ENCODE measurements at regions of chr14 and their contacts with region 1.

Region 1: DNA sequence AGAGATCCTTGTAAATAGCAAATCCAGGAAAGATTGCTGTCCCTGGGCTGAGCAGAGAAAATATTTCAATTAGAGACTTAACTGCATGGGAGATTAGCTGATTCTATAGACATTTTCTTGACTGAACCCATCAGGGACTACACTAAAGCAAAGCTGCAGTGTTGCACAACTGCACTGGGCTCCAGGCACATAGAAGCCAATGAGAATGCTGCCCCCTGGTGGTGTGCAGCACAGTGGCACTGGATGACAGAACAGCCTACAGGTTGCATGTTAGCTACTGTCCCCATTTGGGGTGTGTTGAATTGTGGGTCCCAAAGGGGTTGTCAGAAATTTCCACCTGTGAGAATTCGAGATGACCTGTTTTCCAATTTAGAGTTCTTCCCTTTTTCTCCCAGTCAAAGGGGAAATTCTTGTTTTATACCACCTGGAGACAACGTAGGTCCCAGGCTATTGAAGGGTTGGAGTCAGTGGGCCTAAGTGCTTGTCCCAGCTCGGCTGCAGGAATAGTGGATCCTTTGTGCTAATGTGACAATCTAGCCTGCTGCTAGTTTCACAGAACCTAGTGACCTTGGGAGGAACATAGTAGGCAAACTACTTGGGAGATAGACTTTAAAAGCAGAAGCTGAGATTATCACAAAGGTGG is 114.7 kb downstream of the SLC8A3 start:
- DNase-seq: peak; percentile 68
- H3K4me3 ChIP-seq: no peak overlapping the region
- H3K27ac ChIP-seq: no peak overlapping the region
- H3K4me1 ChIP-seq: no peaks in the 10 kb centered on the region
- H3K27me3 ChIP-seq: no peaks in the 10 kb centered on the region
- CTCF ChIP-seq: peak; percentile 96 to 97

Region 2: DNA sequence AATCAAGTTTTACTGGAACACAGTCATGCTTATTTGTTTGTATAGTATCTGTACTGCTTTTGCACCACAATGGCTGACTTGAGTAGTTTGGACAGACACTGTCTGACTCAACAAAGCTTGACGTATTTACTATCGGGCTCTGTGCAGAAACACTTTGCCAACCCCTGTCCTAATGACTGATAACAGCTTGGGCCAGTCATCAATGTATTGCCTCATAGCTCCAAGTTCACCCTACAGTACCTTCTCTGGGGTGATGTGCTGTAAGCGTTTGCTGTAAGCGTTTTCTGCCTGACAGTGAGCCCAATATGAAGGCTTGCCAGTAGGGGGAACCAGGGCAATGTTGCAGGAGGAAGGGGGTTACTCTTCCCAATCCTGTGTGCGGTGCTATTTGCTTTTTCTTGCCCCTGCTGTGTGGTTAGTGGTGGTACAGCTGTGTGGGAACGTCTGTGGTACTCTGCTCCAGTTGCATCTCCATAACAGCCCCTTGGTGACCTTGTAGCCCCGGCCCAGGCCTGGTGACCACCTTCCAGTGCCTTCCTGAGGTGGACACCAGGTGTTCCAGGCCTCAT is 494.0 kb before region 1 on chr14:
- CTCF ChIA-PET with region 1: no interaction called
- dilution Hi-C with region 1: no loop called
- in situ Hi-C with region 1: no loop called
- intact Hi-C with region 1: loop called (anchors 10 kb)
- DNase-seq: peak; percentile 83
- H3K4me3 ChIP-seq: no peak overlapping the region
- H3K27ac ChIP-seq: no peak overlapping the region
- H3K4me1 ChIP-seq: no peaks in the 10 kb centered on the region
- H3K27me3 ChIP-seq: no peaks in the 10 kb centered on the region
- CTCF ChIP-seq: peak; percentile 24 to 47

Region 3: GRCh38 chr14:69852531-69853321 is 221.3 kb before region 1 on chr14:
- CTCF ChIA-PET with region 1: no interaction called
- dilution Hi-C with region 1: no loop called
- in situ Hi-C with region 1: no loop called
- intact Hi-C with region 1: no loop called
- DNase-seq: no peak
- H3K4me3 ChIP-seq: no peak overlapping the region
- H3K27ac ChIP-seq: no peak overlapping the region
- H3K4me1 ChIP-seq: no peaks in the 10 kb centered on the region
- H3K27me3 ChIP-seq: no peaks in the 10 kb centered on the region
- CTCF ChIP-seq: no peak

Region 4: DNA sequence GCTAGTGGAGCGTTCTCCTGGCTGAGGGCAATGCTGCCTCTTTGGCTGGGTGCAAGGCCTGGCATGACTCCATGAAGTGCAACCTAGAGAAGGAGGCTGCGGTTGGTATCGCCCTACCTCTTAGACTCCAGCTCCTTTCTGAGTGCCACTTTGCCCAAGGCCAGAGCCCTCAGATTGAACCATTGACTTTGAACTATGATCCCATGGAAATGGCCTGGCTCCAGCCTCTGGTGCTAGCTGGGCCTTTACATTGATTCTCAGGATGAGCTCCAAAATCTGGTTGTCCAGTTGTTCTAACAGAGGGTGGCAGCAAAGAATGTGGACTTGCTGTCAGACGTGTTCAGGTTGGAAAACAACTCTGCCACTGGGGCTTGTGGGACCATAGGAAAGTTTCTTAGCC is 211.0 kb before region 1 on chr14:
- CTCF ChIA-PET with region 1: no interaction called
- dilution Hi-C with region 1: no loop called
- in situ Hi-C with region 1: no loop called
- intact Hi-C with region 1: loop called (anchors 5 kb)
- DNase-seq: peak; percentile 23
- H3K4me3 ChIP-seq: no peak overlapping the region
- H3K27ac ChIP-seq: no peak overlapping the region
- H3K4me1 ChIP-seq: no peaks in the 10 kb centered on the region
- H3K27me3 ChIP-seq: no peaks in the 10 kb centered on the region
- CTCF ChIP-seq: peak in 1 of 2 donors; percentile 5

Region 5: DNA sequence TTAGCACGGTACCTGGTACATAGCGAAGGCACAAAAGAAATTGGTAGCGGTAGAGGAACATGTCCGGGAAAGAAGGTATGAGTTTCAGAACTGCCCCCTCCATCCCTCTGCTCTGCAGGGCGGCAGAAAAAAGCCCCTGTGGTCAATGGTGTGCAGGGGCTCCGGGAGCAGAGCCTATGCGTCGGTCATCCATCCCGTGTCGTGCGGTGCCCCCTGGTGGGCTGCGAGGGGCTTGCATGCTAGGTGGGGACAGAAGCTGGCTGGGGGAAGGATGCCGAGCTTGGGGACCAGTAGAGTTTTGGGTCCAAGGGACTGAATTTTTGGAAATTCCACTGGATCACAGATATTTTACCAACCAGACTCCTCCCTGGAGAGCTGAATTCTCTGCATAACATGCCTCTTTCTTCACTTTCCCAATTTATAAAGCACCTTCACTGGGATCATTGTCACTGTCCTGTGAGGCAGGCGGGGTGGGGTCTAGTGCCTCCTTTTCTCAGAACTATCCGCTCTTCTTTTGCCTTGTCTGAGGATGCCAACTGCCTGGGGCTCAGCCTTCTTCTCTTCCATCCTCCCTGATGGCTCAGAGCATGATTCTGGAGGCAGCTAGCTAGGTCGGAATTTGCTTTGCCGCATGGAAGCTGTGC is 46.1 kb before region 1 on chr14:
- CTCF ChIA-PET with region 1: no interaction called
- dilution Hi-C with region 1: loop called (anchors 5 kb)
- in situ Hi-C with region 1: no loop called
- intact Hi-C with region 1: no loop called
- DNase-seq: no peak
- H3K4me3 ChIP-seq: no peak overlapping the region
- H3K27ac ChIP-seq: no peak overlapping the region
- H3K4me1 ChIP-seq: peaks cover 17% of the 10 kb centered on the region
- H3K27me3 ChIP-seq: no peaks in the 10 kb centered on the region
- CTCF ChIP-seq: peak; percentile 88 to 97

Region 6: DNA sequence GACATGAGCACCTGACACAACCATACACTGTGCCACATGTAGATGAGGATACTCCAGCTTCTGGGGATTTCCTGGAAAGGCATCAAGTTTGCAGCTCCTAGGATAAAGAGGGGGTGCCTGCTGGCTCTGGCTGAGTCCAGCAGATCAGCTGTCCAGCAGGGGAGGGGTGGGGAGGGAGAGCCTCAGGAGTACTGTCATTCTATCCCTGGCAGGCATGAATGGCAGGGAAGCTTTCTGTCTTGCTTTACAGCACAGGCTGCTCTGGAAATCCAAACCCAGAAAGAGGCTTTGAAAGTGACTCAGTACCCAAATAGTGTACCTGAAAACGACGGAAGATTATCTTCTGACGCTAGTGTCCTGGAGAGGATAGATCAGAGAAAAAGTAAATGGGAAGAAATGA is 82.5 kb after region 1 on chr14:
- CTCF ChIA-PET with region 1: no interaction called
- dilution Hi-C with region 1: loop called (anchors 5 kb)
- in situ Hi-C with region 1: no loop called
- intact Hi-C with region 1: no loop called
- DNase-seq: no peak
- H3K4me3 ChIP-seq: no peak overlapping the region
- H3K27ac ChIP-seq: no peak overlapping the region
- H3K4me1 ChIP-seq: no peaks in the 10 kb centered on the region
- H3K27me3 ChIP-seq: no peaks in the 10 kb centered on the region
- CTCF ChIP-seq: no peak

Measured in mammary epithelial cell (primary cell).